MCF 10A (cell line): ENCODE measurements at regions of chr1 and their contacts with region 1.

Region 1: GRCh38 chr1:205141236-205142101 is 19.7 kb upstream of the RBBP5 start:
- DNase-seq: peak; percentile 91
- H3K4me3 Mint-ChIP-seq: no peak overlapping the region
- H3K27ac Mint-ChIP-seq: no peak overlapping the region
- H3K4me1 Mint-ChIP-seq: peaks cover 19% of the 10 kb centered on the region
- H3K27me3 Mint-ChIP-seq: no peaks in the 10 kb centered on the region
- CTCF ChIP-seq: peak; percentile 82

Region 2: DNA sequence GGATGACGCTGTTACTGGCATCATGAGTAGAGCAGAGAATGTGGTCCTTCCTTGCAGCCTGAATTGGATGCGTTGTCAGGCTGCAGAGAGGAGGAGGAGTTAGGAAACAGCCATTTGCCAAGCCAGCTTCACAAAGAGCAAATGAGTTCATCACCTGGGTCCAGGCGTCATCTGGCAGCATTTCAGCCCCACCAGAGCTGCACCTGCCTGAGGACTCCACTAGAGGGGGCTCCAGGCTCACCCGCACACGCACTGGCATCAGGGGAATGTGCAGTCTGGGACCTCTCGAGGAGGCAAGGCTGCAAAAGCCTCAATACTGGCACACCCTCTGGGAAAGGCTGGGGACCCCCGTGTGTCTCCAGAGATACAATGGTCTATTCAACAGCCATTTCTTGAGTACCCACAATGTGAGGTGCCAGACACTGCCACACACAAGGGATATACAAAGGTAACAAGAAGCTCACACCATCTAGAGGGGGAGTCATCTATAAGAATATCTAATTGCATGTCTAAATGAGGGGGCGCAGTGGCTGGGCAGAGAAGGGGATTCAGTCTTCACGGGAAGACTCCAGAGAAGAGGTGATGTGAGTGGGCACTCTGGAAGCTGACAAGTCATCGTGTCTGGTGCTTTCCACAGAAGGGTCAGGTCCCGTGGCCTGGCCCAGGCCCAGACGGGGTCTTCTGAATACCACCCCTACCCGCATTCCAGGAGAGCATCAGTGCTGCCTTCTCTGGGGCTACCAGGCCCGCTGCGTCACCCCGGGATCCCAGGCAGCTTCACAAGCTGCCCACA is 152.0 kb before region 1 on chr1:
- CTCF ChIA-PET with region 1: interaction called, 66 read pairs
- POLR2A ChIA-PET with region 1: interaction called, 3 read pairs
- intact Hi-C with region 1: loop called (anchors 1 kb)
- DNase-seq: peak; percentile 91
- H3K4me3 Mint-ChIP-seq: no peak overlapping the region
- H3K27ac Mint-ChIP-seq: no peak overlapping the region
- H3K4me1 Mint-ChIP-seq: no peaks in the 10 kb centered on the region
- H3K27me3 Mint-ChIP-seq: peaks cover 99% of the 10 kb centered on the region
- CTCF ChIP-seq: peak; percentile 100

Region 3: GRCh38 chr1:205091043-205091740 is 50.3 kb before region 1 on chr1:
- CTCF ChIA-PET with region 1: interaction called, 11 read pairs
- POLR2A ChIA-PET with region 1: interaction called, 3 read pairs
- intact Hi-C with region 1: no loop called
- DNase-seq: peak; percentile 75
- H3K4me3 Mint-ChIP-seq: no peak overlapping the region
- H3K27ac Mint-ChIP-seq: peak overlapping the region; percentile 40
- H3K4me1 Mint-ChIP-seq: peaks cover 15% of the 10 kb centered on the region
- H3K27me3 Mint-ChIP-seq: no peaks in the 10 kb centered on the region
- CTCF ChIP-seq: no peak

Region 4: DNA sequence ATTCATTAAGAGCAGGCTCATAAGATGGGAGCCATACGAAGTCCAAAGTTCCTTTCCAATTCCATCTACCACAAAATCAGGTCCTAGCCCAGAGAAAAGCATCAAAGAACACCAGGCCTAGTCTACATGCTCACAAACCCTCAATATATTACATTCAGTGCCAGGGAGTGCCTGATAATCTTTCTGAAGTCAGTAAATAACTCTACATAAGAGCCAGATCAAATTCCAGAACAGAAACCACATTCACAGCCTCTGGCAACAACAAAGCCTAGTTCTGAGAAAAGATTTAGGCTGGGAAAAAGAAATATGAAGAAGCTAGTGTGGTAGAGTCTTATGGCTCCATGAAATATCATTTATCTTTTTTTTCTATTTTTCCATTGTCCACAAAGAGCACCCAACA is 20.8 kb after region 1 on chr1:
- CTCF ChIA-PET with region 1: interaction called, 33 read pairs
- POLR2A ChIA-PET with region 1: no interaction called
- intact Hi-C with region 1: no loop called
- DNase-seq: no peak
- H3K4me3 Mint-ChIP-seq: no peak overlapping the region
- H3K27ac Mint-ChIP-seq: no peak overlapping the region
- H3K4me1 Mint-ChIP-seq: no peaks in the 10 kb centered on the region
- H3K27me3 Mint-ChIP-seq: no peaks in the 10 kb centered on the region
- CTCF ChIP-seq: no peak

Region 5: GRCh38 chr1:205211169-205211838 is 69.8 kb after region 1 on chr1 and contains the start of gene DSTYK:
- CTCF ChIA-PET with region 1: no interaction called
- POLR2A ChIA-PET with region 1: interaction called, 6 read pairs
- intact Hi-C with region 1: loop called (anchors 1 kb)
- DNase-seq: peak; percentile 99
- H3K4me3 Mint-ChIP-seq: peak within 1 kb of the TSS; percentile 73
- H3K27ac Mint-ChIP-seq: peak within 1 kb of the TSS; percentile 94
- H3K4me1 Mint-ChIP-seq: peaks cover 12% of the 10 kb centered on the region
- H3K27me3 Mint-ChIP-seq: peaks cover 12% of the 10 kb centered on the region
- CTCF ChIP-seq: no peak
- total RNA-seq, gene DSTYK: 18.4 and 21.5 TPM in 2 replicates

Region 6: GRCh38 chr1:205255941-205256780 is 114.7 kb after region 1 on chr1:
- CTCF ChIA-PET with region 1: interaction called, 113 read pairs
- POLR2A ChIA-PET with region 1: interaction called, 5 read pairs
- intact Hi-C with region 1: loop called (anchors 1 kb)
- DNase-seq: peak; percentile 95
- H3K4me3 Mint-ChIP-seq: no peak overlapping the region
- H3K27ac Mint-ChIP-seq: no peak overlapping the region
- H3K4me1 Mint-ChIP-seq: peaks cover 31% of the 10 kb centered on the region
- H3K27me3 Mint-ChIP-seq: no peaks in the 10 kb centered on the region
- CTCF ChIP-seq: peak; percentile 100